OCI-LY7 (cell line): ENCODE measurements at regions of chr7 and their contacts with region 1.

Region 1: GRCh38 chr7:134766779-134767519 is 12.5 kb upstream of the CALD1 start:
- DNase-seq: peak; percentile 77
- H3K4me3 ChIP-seq: peak overlapping the region; percentile 12
- H3K27ac ChIP-seq: peak overlapping the region; percentile 57
- H3K4me1 ChIP-seq: peaks cover 21% of the 10 kb centered on the region
- CTCF ChIP-seq: no peak

Region 2: GRCh38 chr7:134548877-134549276 is 218.1 kb before region 1 on chr7 and contains the start of gene AKR1B15:
- CTCF ChIA-PET with region 1: no interaction called
- POLR2A ChIA-PET with region 1: no interaction called
- intact Hi-C with region 1: no loop called
- DNase-seq: no peak
- H3K4me3 ChIP-seq: no peak within 1 kb of the TSS
- H3K27ac ChIP-seq: no peak within 1 kb of the TSS
- H3K4me1 ChIP-seq: no peaks in the 10 kb centered on the region
- CTCF ChIP-seq: no peak
- total RNA-seq, gene AKR1B15: not detected in 2 replicates

Region 3: GRCh38 chr7:134726581-134726980 is 40.4 kb before region 1 on chr7:
- CTCF ChIA-PET with region 1: no interaction called
- POLR2A ChIA-PET with region 1: interaction called, 10 read pairs
- intact Hi-C with region 1: no loop called
- DNase-seq: no peak
- H3K4me3 ChIP-seq: no peak overlapping the region
- H3K27ac ChIP-seq: no peak overlapping the region
- H3K4me1 ChIP-seq: no peaks in the 10 kb centered on the region
- CTCF ChIP-seq: no peak

Region 4: DNA sequence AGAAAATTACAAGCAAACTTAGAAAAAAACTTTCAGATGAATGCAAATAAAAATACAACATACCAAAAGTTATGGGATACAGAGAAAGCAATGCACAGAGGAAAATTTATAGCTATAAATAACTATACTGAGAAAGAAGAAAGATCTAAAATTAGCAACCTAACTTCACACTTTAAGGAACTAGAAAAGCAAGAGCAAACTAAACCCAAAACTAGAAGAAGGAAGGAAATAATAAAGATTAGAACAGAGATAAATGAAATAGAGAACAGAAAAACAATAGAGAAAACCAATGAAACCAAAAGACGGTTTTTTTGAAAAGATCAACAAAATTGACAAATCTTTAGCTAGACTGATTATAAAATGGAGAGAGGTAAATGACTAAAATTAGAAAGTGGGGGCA is 457.1 kb after region 1 on chr7:
- CTCF ChIA-PET with region 1: no interaction called
- POLR2A ChIA-PET with region 1: no interaction called
- intact Hi-C with region 1: no loop called
- DNase-seq: no peak
- H3K4me3 ChIP-seq: no peak overlapping the region
- H3K27ac ChIP-seq: no peak overlapping the region
- H3K4me1 ChIP-seq: no peaks in the 10 kb centered on the region
- CTCF ChIP-seq: no peak